Endothelial cell of umbilical vein (primary cell): ENCODE measurements at regions of chr17 and their contacts with region 1.

Region 1: DNA sequence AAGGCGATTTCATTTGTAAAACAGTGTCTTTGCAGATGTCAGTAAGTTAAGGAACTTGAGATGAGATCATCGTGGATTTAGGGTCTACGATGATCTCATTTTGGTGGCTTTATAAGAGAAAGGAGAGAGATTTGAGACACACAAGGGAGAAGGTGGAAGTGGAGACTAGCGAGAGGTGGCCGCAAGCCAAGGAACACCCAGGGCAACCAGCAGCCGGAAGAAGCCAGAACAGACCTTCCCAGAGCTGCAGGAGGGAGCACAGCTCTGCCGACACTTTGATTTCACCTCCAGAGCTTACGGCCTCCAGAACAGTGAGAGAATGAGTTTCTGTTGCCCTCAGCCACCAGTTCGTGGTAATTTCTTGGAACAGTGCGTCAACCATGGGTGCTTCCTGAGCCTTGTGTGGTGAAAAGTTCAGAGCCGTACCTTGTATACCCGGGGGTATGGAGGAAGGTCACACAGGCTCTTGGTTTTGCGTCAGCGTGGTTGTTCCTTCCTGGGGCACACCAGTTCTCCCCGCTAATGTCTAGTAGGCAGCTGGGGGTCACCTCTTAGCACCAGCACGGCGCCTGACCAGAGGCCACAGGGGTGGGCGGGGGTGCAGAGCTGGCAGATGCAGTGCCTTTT is 12.9 kb upstream of the SEC14L1 start:
- DNase-seq: no peak
- H3K4me3 ChIP-seq: no peak overlapping the region
- H3K27ac ChIP-seq: peak overlapping the region; percentile 98
- H3K4me1 ChIP-seq: peaks cover 43% of the 10 kb centered on the region
- H3K27me3 ChIP-seq: no peaks in the 10 kb centered on the region
- CTCF ChIP-seq: no peak
- POLR2A ChIP-seq: no peak

Region 2: DNA sequence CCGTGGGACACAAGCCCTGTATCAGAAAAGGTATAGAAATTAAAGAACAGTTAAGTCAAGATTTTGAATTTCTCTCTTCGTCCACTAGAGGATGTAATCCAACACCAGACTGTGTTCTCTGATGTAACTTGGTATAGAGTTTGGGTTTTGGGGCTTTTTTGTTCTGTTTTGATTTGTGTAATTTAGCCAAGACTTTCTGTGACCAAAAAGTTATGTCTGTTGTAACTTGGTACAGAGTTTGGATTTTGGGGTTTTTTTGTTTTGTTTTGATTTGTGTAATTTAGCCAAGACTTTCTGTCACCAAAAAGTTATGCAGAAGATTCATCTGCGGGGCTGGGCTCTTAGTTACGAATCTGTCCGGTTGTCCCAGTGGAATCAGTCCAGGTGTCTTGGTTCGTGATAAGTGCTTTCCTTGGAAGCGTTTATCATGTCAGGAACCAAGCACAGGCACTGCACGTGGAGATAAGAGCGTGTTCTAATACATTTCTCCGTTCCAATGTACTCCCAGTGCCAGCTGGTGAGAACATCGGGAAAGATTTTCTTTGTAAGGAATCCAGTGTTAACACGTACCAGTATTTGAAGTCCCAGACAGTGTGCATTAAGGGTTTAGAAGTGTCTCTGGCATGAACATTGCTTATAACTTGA is 31.2 kb before region 1 on chr17:
- CTCF ChIA-PET with region 1: interaction called, 15 read pairs
- POLR2A ChIA-PET with region 1: no interaction called
- dilution Hi-C with region 1: no loop called
- intact Hi-C with region 1: loop called (anchors 1 kb)
- DNase-seq: peak; percentile 78
- H3K4me3 ChIP-seq: no peak overlapping the region
- H3K27ac ChIP-seq: peak overlapping the region; percentile 86
- H3K4me1 ChIP-seq: peaks cover 50% of the 10 kb centered on the region
- H3K27me3 ChIP-seq: no peaks in the 10 kb centered on the region
- CTCF ChIP-seq: peak; percentile 47 to 58
- POLR2A ChIP-seq: peak; percentile 35

Region 3: DNA sequence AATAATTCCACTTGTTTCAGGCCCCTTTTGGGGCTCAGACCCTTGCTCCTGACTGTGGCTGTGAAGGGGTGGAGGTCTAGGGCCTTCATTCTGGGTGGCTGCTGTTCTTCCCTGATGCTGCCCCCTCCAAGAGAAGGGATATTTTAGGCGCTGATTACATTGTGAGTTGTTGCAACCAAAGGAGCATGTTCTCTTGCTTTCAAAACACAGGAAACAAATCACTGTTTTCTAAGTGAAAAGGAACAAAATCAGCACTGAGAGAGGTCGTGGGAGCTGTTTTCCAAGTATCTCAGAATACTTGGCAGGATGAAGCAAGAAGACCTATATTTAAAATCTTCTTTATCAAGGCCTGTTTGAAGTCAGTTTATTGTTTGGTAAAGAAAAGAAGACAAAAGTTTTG is 12.3 kb before region 1 on chr17:
- CTCF ChIA-PET with region 1: interaction called, 25 read pairs
- POLR2A ChIA-PET with region 1: interaction called, 30 read pairs
- dilution Hi-C with region 1: no loop called
- intact Hi-C with region 1: loop called (anchors 1 kb)
- DNase-seq: peak; percentile 87
- H3K4me3 ChIP-seq: no peak overlapping the region
- H3K27ac ChIP-seq: peak overlapping the region; percentile 95
- H3K4me1 ChIP-seq: peaks cover 51% of the 10 kb centered on the region
- H3K27me3 ChIP-seq: no peaks in the 10 kb centered on the region
- CTCF ChIP-seq: no peak
- POLR2A ChIP-seq: no peak

Region 4: GRCh38 chr17:77145612-77146245 is 17.9 kb after region 1 on chr17:
- CTCF ChIA-PET with region 1: interaction called, 15 read pairs
- POLR2A ChIA-PET with region 1: interaction called, 44 read pairs
- dilution Hi-C with region 1: no loop called
- intact Hi-C with region 1: loop called (anchors 1 kb)
- DNase-seq: peak; percentile 80
- H3K4me3 ChIP-seq: peak overlapping the region in 2 of 3 experiments; percentile 23 to 67
- H3K27ac ChIP-seq: peak overlapping the region; percentile 97
- H3K4me1 ChIP-seq: peaks cover 84% of the 10 kb centered on the region
- H3K27me3 ChIP-seq: no peaks in the 10 kb centered on the region
- CTCF ChIP-seq: peak in 1 of 2 donors; percentile 47
- POLR2A ChIP-seq: peak; percentile 23

Region 5: DNA sequence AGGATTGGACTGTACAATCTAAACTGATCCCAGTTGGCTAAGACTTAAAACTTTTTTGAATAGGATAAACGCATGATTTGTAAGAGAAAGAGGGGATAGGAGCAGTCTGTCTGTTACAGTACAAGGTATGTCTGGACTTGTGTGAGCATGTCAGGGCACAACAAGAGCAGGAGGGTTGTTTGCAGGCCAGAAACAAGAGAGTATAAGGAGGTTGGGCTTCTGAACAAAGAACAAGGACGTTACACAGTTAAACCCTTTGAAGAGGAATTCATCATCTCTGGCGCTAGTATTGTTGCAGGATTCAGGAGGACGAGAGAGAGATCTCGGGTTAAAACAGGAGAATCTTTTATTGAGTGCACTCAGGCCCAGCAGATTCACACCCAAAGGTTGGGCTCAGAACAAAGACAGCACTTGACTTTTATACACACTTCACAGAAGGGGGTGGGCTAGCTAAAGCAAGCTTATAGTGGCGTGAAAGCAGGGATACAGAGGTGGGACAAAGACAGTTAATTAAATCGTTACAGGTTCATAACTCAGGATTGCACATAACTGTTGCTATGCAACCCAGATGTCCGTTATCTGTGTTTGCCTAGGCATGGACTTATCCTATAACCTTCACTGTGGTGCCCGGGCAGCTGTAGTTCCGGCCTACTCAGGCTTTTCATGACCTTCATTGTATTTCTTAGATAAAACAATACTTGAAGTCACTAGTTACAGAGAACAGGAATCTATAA is 47.2 kb after region 1 on chr17:
- CTCF ChIA-PET with region 1: interaction called, 4 read pairs
- POLR2A ChIA-PET with region 1: no interaction called
- dilution Hi-C with region 1: no loop called
- intact Hi-C with region 1: loop called (anchors 1 kb)
- DNase-seq: peak; percentile 91
- H3K4me3 ChIP-seq: no peak overlapping the region
- H3K27ac ChIP-seq: peak overlapping the region; percentile 88
- H3K4me1 ChIP-seq: peaks cover 67% of the 10 kb centered on the region
- H3K27me3 ChIP-seq: no peaks in the 10 kb centered on the region
- CTCF ChIP-seq: no peak
- POLR2A ChIP-seq: peak; percentile 74

Region 6: DNA sequence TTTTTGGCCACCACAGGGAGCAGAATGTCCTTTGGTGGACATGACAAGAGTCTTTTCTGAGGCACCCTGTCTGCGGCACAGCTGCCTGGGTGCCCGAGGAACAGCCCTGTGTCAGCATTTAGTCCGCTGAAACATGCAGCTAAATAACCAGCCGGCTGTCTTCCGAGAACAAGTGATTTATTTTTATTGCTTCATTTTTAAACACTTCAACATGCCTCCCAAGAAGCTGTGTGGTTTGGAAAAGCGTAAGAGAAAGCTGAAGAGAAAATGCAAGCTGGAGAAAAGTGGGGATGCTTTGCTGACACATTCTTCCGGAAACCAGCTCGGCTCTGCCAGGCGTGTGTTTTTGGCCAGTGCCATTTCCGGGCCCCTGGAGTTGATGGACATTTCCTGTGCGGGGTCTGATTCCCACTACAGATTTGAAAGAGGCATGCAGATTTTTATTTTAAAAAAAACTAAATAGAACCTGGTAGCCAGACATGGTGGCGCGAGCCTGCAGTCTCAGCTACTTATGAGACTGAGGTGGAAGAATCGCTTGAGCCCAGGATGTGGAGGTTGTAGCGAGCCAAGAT is 107.6 kb after region 1 on chr17:
- CTCF ChIA-PET with region 1: no interaction called
- POLR2A ChIA-PET with region 1: no interaction called
- dilution Hi-C with region 1: no loop called
- intact Hi-C with region 1: loop called (anchors 1 kb)
- DNase-seq: peak; percentile 73
- H3K4me3 ChIP-seq: peak overlapping the region in 1 of 3 experiments; percentile 15
- H3K27ac ChIP-seq: peak overlapping the region; percentile 81
- H3K4me1 ChIP-seq: peaks cover 23% of the 10 kb centered on the region
- H3K27me3 ChIP-seq: no peaks in the 10 kb centered on the region
- CTCF ChIP-seq: no peak
- POLR2A ChIP-seq: peak; percentile 57